ENCODE measurements at regions of chr11 and their contacts with region 1.

Region 1: DNA sequence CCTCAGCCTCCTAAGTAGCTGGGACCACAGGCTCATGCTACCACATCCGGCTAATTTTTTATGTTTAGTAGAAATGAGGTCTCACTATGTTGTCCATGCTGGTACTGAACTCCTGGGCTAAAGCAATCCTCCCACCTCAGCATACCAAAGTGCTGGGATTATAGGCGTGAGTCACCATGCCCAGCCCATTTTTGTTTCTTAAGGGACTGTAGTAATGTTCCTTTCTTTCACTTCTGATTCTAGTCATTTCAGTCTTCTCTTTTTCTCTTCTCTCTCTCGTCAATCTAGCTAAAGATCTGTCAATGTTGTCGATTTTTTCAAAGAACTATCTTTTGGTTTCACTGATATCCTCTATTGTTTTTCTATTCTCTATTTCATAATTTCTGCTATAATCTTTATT is 111.0 kb upstream of the APOA1 start:
- DNase-seq: peak; percentile 71
- H3K4me3 Mint-ChIP-seq: no peak overlapping the region
- H3K27ac Mint-ChIP-seq: peak overlapping the region; percentile 2
- H3K4me1 Mint-ChIP-seq: peaks cover 18% of the 10 kb centered on the region
- H3K27me3 Mint-ChIP-seq: no peaks in the 10 kb centered on the region

Region 2: GRCh38 chr11:116808386-116809194 is 139.8 kb before region 1 on chr11:
- intact Hi-C with region 1: no loop called
- DNase-seq: no peak
- H3K4me3 Mint-ChIP-seq: no peak overlapping the region
- H3K27ac Mint-ChIP-seq: no peak overlapping the region
- H3K4me1 Mint-ChIP-seq: no peaks in the 10 kb centered on the region
- H3K27me3 Mint-ChIP-seq: peaks cover 23% of the 10 kb centered on the region

Region 3: DNA sequence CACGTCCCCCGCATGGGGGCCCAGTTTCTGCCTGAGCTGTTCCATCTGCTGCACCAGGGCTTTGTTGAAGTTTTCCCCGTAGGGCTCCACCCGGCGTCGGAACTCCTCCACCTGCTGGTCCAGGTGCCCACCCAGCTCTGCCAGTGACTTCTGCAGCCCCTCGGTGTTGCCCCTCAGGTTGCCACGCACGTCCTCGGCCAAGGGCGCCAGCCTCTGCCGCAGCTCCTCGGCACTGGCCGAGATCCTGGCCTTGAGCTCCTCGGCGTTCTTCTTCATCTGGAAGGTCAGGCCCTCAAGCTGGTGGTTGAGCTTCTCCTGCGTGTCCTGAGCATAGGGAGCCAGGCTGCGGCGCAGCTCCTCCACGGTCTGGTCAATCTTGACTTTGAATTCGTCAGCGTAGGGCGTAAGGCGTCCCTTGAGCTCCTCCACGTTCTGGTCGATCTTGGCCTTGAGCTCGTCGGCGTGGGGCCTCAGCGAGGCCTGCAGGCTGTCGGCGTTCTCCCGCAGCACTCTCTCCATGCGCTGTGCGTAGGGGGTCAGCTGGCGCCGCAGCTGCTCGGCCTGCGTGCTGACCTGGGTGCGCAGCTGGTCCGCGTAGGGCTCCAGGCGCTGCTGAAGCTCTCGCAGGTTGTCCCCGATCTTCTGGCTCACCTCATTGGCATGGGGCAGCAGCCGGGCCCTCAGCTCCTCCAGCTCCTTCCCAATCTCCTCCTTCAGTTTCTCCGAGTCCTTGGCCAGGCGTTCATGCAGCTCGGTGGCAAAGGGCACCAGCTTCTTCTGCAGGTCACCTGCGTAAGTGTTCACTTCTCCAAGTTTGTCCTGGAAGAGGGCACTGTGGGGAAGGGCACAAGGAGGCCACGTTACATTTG is 127.1 kb before region 1 on chr11:
- intact Hi-C with region 1: no loop called
- DNase-seq: peak; percentile 50
- H3K4me3 Mint-ChIP-seq: no peak overlapping the region
- H3K27ac Mint-ChIP-seq: no peak overlapping the region
- H3K4me1 Mint-ChIP-seq: no peaks in the 10 kb centered on the region
- H3K27me3 Mint-ChIP-seq: no peaks in the 10 kb centered on the region

Region 4: GRCh38 chr11:116930177-116930576 is 18.2 kb before region 1 on chr11:
- intact Hi-C with region 1: loop called (anchors 2 kb)
- DNase-seq: peak; percentile 86
- H3K4me3 Mint-ChIP-seq: peak overlapping the region; percentile 88
- H3K27ac Mint-ChIP-seq: peak overlapping the region; percentile 89
- H3K4me1 Mint-ChIP-seq: peaks cover 55% of the 10 kb centered on the region
- H3K27me3 Mint-ChIP-seq: no peaks in the 10 kb centered on the region

Region 5: GRCh38 chr11:117010808-117011540 is 62.6 kb after region 1 on chr11:
- intact Hi-C with region 1: loop called (anchors 1 kb)
- DNase-seq: no peak
- H3K4me3 Mint-ChIP-seq: no peak overlapping the region
- H3K27ac Mint-ChIP-seq: peak overlapping the region; percentile 80
- H3K4me1 Mint-ChIP-seq: peaks cover 30% of the 10 kb centered on the region
- H3K27me3 Mint-ChIP-seq: no peaks in the 10 kb centered on the region

Region 6: GRCh38 chr11:117092951-117093590 is 144.7 kb after region 1 on chr11:
- intact Hi-C with region 1: loop called (anchors 1 kb)
- DNase-seq: no peak
- H3K4me3 Mint-ChIP-seq: peak overlapping the region; percentile 60
- H3K27ac Mint-ChIP-seq: peak overlapping the region; percentile 72
- H3K4me1 Mint-ChIP-seq: peaks cover 62% of the 10 kb centered on the region
- H3K27me3 Mint-ChIP-seq: no peaks in the 10 kb centered on the region

Region 7: DNA sequence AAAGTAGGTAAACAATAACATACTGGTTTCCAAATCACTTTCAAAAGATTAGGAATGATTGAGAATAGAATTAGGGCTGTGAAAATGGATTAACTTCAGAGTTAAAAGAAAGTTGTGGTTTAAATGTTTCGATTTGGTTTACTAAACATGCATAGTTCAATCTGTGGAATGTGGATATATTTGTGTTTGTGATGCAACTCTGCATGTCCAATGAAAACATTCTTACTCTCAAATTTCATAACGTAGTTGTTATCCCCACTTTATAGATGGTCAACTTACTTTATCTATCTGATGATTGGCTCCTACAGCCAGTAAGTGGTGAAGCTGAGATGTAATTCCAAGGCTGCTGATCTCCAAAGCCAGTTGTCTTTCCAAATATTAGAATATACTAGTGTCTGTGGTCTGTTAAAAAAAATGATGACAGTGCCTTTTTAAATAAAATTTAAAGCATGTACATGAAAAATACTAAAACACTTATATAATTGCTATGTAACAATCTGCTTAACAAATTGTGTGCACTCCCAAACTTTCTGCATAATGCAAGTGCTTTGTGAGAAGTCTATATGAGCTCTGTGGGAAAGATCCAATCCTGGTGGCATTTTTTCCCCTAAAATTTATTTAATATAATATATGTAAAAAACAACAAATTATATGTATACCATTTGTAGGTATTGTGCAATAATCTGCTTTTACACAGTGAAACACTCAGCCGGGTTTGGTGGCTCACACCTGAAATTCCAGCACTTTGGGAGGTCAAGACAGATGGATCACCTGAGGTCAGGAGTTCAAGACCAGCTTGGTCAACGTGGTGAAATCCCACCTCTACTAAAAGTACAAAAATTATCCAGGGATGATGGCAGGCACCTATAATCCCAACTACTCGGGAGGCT is 159.6 kb after region 1 on chr11:
- intact Hi-C with region 1: no loop called
- DNase-seq: no peak
- H3K4me3 Mint-ChIP-seq: no peak overlapping the region
- H3K27ac Mint-ChIP-seq: no peak overlapping the region
- H3K4me1 Mint-ChIP-seq: no peaks in the 10 kb centered on the region
- H3K27me3 Mint-ChIP-seq: peaks cover 5% of the 10 kb centered on the region